ENCODE measurements at regions of chr20 and their contacts with region 1.

Region 1: DNA sequence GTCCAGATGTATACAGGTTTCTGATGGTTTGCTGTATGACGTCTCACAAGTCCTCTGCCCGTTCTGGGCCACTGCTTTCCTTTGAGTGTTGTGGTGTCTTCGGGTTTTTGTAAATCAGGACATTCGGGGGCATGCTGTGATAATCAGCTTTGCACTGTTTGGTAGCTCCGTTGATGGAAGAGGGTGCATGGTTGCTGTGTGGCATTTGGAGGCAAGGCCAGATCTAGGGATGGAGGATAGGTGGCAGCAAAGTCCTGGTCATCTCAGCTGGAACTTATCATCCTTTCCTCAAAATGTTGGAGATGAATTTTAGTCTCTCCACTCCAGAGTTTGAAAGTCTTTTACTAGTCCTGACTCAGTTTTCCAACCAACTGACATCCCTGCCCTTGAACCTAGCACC is 91.0 kb downstream of the SCP2D1 start:
- DNase-seq: no peak
- ATAC-seq: no peak

Region 2: DNA sequence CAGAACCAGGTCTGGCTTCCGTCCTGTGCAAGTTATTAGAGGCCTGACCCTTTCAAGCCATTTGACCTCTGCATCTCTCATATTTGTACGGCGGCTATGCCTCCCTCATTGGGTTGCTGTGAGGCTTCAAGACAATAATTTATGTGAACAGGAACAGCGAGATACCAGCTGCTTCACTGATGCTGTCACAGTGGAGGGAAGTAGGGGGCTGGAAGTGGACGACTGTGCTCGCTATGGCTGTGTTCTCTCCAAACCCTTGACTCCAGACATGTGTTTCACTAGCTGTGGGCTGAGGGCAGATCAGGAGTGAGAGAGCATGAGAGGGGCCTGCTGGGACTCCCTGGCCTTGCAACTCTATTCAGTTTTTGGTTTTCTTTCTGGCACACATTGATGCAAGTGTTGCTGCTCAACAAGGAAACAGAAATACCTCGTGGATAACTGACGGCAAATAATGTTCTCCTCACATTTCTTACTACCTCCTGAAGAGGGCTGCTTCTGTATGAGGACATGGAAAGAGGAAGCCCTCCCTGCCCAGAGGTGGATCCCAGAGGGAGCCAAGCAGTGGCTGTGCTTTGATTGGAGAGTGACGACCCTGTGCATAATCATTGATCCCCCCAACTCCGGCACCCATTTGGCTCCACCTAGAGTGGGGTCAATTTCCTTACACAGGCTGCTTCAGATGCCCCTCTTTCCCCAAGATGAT is 125.8 kb before region 1 on chr20:
- intact Hi-C with region 1: no loop called
- DNase-seq: no peak
- ATAC-seq: no peak

Region 3: GRCh38 chr20:18831830-18832499 is 72.7 kb before region 1 on chr20:
- intact Hi-C with region 1: no loop called
- DNase-seq: no peak
- ATAC-seq: no peak

Region 4: GRCh38 chr20:19583532-19584175 is 679.0 kb after region 1 on chr20:
- intact Hi-C with region 1: loop called (anchors 10 kb)
- DNase-seq: peak; percentile 83
- ATAC-seq: peak; percentile 79

Measured in Right ventricle myocardium inferior (tissue), 1 donor.